Activated CD8-positive, alpha-beta T cell treated with anti-CD3 and anti-CD28 coated beads, Interleukin-2, amount 10 ng/mL, durations not matched to agents 7 days and 5 days (primary cell): ENCODE measurements at regions of chr11 and their contacts with region 1.

Region 1: DNA sequence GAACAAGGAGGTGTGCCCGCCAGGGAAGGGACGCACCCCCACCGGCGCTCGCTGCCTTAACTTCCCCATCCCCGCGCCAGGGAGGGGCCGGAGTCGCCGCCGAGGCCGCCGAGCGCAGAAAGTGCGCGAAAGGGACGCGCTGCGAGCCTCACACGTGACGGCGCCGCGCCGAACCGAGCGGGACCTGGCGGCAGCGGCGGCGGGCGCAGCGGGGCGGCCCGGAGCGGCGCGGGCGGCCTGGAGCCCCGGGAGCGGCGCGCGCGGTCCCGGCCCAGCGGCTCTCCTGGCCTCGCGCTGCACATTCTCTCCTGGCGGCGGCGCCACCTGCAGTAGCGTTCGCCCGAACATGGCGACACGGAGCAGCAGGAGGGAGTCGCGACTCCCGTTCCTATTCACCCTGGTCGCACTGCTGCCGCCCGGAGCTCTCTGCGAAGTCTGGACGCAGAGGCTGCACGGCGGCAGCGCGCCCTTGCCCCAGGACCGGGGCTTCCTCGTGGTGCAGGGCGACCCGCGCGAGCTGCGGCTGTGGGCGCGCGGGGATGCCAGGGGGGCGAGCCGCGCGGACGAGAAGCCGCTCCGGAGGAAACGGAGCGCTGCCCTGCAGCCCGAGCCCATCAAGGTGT is at the start of gene SORL1:
- DNase-seq: peak; percentile 79
- ATAC-seq: peak; percentile 74
- H3K4me3 Mint-ChIP-seq: peak within 1 kb of the TSS; percentile 85
- H3K27ac Mint-ChIP-seq: peak within 1 kb of the TSS; percentile 97
- H3K4me1 Mint-ChIP-seq: peaks cover 86% of the 10 kb centered on the region
- H3K27me3 Mint-ChIP-seq: no peaks in the 10 kb centered on the region
- total RNA-seq, gene SORL1: 98.9 to 107 TPM

Region 2: GRCh38 chr11:121318848-121319834 is 133.0 kb before region 1 on chr11:
- CTCF ChIA-PET with region 1: interaction called, 30 read pairs
- POLR2A ChIA-PET with region 1: no interaction called
- DNase-seq: peak; percentile 46
- ATAC-seq: peak; percentile 77
- H3K4me3 Mint-ChIP-seq: no peak overlapping the region
- H3K27ac Mint-ChIP-seq: peak overlapping the region; percentile 36
- H3K4me1 Mint-ChIP-seq: peaks cover 25% of the 10 kb centered on the region
- H3K27me3 Mint-ChIP-seq: peaks cover 12% of the 10 kb centered on the region

Region 3: DNA sequence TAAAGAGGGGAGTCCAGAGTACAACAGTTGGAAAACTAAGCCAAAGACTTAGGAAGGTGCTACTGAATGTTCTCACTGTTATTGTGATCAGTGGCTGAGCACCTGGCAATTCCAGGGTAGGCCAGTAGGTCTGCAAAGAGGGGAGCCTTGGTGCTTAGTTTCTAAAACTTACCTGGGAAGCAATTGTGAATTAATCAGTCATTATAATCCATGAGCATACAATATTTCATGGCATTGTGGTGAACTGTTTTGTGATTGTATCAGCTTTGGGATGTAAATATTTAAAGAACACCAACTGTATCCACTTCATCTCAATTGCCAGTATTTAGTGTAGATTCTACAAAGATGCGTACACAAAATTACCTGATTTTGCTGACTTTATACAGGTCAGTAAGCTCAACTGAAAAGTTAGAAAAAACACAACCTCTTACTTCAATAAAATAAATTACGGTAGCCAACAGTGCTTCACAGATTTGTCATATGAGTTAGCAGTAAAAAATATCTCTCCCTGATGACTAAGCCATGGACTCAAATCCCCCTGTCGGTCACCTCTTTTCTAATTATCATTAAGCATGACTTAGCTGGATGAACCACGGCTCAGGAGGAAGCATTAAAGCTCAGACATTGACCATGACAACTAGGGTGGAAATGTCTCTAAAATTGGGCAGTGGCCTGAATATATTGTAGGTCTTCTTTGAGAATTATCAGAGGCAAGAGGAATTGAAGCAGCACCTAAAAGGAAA is 30.8 kb before region 1 on chr11:
- CTCF ChIA-PET with region 1: interaction called, 10 read pairs
- POLR2A ChIA-PET with region 1: interaction called, 8 read pairs
- DNase-seq: no peak
- ATAC-seq: no peak
- H3K4me3 Mint-ChIP-seq: no peak overlapping the region
- H3K27ac Mint-ChIP-seq: peak overlapping the region; percentile 23
- H3K4me1 Mint-ChIP-seq: peaks cover 69% of the 10 kb centered on the region
- H3K27me3 Mint-ChIP-seq: peaks cover 2% of the 10 kb centered on the region

Region 4: GRCh38 chr11:121464352-121464946 is 12.4 kb after region 1 on chr11:
- CTCF ChIA-PET with region 1: interaction called, 90 read pairs
- POLR2A ChIA-PET with region 1: interaction called, 156 read pairs
- DNase-seq: peak; percentile 86
- ATAC-seq: peak; percentile 78
- H3K4me3 Mint-ChIP-seq: peak overlapping the region; percentile 67
- H3K27ac Mint-ChIP-seq: peak overlapping the region; percentile 93
- H3K4me1 Mint-ChIP-seq: peaks cover 98% of the 10 kb centered on the region
- H3K27me3 Mint-ChIP-seq: no peaks in the 10 kb centered on the region

Region 5: GRCh38 chr11:121482231-121483129 is 30.4 kb after region 1 on chr11:
- CTCF ChIA-PET with region 1: interaction called, 6 read pairs
- POLR2A ChIA-PET with region 1: interaction called, 41 read pairs
- DNase-seq: peak; percentile 81
- ATAC-seq: peak; percentile 82
- H3K4me3 Mint-ChIP-seq: peak overlapping the region; percentile 71
- H3K27ac Mint-ChIP-seq: peak overlapping the region; percentile 93
- H3K4me1 Mint-ChIP-seq: peaks cover 59% of the 10 kb centered on the region
- H3K27me3 Mint-ChIP-seq: no peaks in the 10 kb centered on the region

Region 6: GRCh38 chr11:121521145-121522042 is 69.3 kb after region 1 on chr11:
- CTCF ChIA-PET with region 1: no interaction called
- POLR2A ChIA-PET with region 1: no interaction called
- DNase-seq: no peak
- ATAC-seq: no peak
- H3K4me3 Mint-ChIP-seq: no peak overlapping the region
- H3K27ac Mint-ChIP-seq: peak overlapping the region; percentile 15
- H3K4me1 Mint-ChIP-seq: peaks cover 43% of the 10 kb centered on the region
- H3K27me3 Mint-ChIP-seq: no peaks in the 10 kb centered on the region

Region 7: GRCh38 chr11:121892131-121892681 is 440.1 kb after region 1 on chr11:
- CTCF ChIA-PET with region 1: no interaction called
- POLR2A ChIA-PET with region 1: no interaction called
- DNase-seq: no peak
- ATAC-seq: no peak
- H3K4me3 Mint-ChIP-seq: no peak overlapping the region
- H3K27ac Mint-ChIP-seq: no peak overlapping the region
- H3K4me1 Mint-ChIP-seq: no peaks in the 10 kb centered on the region
- H3K27me3 Mint-ChIP-seq: peaks cover 5% of the 10 kb centered on the region